ENCODE measurements at regions of chr11 and their contacts with region 1.

Region 1: DNA sequence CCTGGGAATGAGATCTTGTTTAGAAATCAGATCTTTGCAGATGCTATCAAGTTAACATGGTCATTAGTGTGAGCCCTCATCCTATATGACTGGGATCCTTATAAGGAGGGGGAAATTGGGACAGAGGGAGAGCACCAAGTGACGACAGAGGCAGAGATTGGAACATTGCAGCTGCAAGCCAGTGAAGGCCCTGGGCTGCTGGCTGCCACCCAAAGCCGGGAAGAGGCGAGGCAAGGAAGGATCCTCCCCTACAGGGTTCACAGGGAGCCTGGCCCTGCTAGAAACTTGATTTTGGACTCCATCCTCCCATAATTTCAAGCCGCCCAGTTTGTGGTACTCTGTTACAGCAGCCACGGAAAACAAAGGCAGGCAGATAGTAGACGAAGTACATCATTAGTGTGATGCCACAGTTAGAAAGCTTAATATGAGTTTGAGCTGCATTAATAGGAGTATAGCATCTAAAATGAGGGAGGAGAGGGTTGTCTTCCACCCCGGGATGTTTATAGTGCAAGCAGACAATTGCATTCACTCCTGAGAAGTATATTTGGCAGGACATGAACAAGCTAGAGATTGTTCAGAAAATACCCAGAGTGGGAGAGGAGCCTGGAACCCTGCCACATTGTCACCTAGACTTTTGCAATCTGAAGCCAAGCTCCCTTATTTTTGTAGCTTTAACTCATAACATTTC is 56.8 kb upstream of the CLMP start:
- DNase-seq: peak in 1 of 2 donors; percentile 75
- H3K4me3 ChIP-seq: no peak overlapping the region
- H3K27ac ChIP-seq: peak overlapping the region in 1 of 5 donors; percentile 39
- H3K4me1 ChIP-seq: peaks cover 0 to 21% (median 10%) of the 10 kb centered on the region in 4 donors
- H3K27me3 ChIP-seq: peaks cover 0 to 7% (median 0%) of the 10 kb centered on the region in 3 donors
- CTCF ChIP-seq: no peak
- EP300 ChIP-seq: no peak
- POLR2A ChIP-seq: no peak

Region 2: DNA sequence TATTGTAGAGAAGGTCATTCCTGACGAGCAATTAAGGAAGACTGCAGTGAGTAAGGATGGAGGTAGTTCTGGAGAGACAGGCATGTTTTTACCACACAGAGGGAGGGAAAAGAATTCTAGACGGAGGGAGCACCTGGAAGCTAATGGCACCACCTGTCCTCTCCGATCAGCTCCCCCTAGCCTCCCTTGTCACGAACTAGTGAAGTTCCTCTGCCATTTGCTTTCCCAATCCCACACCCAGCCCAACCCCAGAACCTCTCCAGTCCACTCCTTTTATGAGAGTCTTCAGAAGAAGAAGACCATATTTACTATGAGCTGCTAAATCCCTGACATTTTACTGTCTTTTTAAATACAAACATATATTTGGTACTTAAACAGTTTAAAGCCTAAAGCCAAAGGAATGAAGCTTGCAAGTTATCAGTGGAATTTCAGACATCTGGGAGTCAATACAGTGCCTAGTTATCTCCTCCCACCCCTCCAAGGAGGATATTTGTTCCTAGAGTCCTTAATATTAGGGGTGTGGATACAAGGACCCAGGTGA is 143.8 kb before region 1 on chr11:
- intact Hi-C with region 1: loop called (anchors 5 kb)
- DNase-seq: no peak
- H3K4me3 ChIP-seq: no peak overlapping the region
- H3K27ac ChIP-seq: no peak overlapping the region
- H3K4me1 ChIP-seq: peaks cover 4 to 36% (median 8%) of the 10 kb centered on the region in 4 donors
- H3K27me3 ChIP-seq: no peaks in the 10 kb centered on the region
- CTCF ChIP-seq: no peak
- EP300 ChIP-seq: no peak
- POLR2A ChIP-seq: no peak

Measured in stomach (tissue), 19 donors.